ENCODE measurements at regions of chr4 and their contacts with region 1.

Region 1: GRCh38 chr4:47463235-47463956 is at the start of gene COMMD8:
- DNase-seq: peak; percentile 90
- H3K4me3 ChIP-seq: peak within 1 kb of the TSS; percentile 81
- H3K27ac ChIP-seq: no peak within 1 kb of the TSS
- H3K27me3 ChIP-seq: no peaks in the 10 kb centered on the region
- CTCF ChIP-seq: peak; percentile 32; the same call in 1 of the 2 replicates
- polyA plus RNA-seq, gene COMMD8: 21.1 and 35.1 TPM in 2 replicates

Region 2: DNA sequence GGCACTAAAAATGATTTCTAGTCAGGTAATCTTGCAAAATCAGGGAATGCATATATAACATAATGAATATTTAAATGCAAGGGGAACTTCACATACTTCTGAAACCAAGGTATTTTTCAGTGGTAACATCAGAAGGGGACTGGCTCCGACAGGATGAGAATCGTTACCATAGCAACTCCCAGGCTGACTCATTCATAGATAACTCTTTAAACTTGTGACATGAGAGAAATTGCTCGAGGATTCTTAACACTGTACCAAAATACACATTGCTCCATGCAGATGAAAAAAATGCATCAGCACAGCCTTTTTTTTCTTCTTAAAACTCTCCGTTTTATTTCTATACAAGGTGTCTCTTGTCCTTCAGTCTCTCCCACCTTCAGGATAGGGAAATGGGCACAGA is 317.8 kb before region 1 on chr4:
- CTCF ChIA-PET with region 1: no interaction called
- POLR2A ChIA-PET with region 1: no interaction called
- DNase-seq: peak; percentile 67
- H3K4me3 ChIP-seq: no peak overlapping the region
- H3K27ac ChIP-seq: no peak overlapping the region
- H3K27me3 ChIP-seq: no peaks in the 10 kb centered on the region
- CTCF ChIP-seq: no peak

Region 3: DNA sequence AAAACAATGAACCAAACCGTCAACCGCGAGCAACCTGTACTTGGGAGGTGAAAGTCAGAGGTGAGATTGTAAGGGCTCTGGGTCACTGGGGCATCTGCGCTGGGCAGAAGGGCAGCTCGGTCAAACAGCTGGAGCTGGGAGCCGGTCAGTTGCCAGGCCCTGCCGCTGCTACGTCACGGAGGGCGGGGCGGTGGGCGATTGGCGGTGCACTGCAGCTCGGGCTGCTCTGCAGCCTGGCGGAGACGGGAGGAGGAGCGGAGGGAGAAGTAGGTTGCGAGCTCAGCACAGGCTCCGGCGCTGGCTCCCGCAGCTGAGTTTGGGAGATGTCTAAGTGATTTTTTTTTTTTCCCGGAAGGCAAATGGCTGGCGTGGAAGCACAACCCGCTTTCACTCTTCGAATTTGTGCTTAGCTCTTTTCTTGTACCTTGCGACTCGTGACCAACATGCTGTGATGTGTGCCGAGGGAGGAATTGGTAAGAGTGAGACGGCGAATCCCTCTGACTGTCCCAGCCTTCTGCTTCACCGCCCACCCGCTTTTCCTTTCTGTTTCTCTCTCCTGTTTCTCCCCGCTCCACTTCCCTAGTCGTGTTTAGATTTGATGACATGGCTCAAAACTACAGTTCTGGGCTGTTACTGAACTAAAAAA is 21.8 kb after region 1 on chr4 and contains the start of gene ATP10D:
- CTCF ChIA-PET with region 1: interaction called, 4 read pairs
- POLR2A ChIA-PET with region 1: interaction called, 12 read pairs
- DNase-seq: peak; percentile 79
- H3K4me3 ChIP-seq: peak within 1 kb of the TSS; percentile 78
- H3K27ac ChIP-seq: peak within 1 kb of the TSS; percentile 93
- H3K27me3 ChIP-seq: no peaks in the 10 kb centered on the region
- CTCF ChIP-seq: peak; percentile 33
- polyA plus RNA-seq, gene ATP10D: 44.5 and 48.2 TPM in 2 replicates

Region 4: DNA sequence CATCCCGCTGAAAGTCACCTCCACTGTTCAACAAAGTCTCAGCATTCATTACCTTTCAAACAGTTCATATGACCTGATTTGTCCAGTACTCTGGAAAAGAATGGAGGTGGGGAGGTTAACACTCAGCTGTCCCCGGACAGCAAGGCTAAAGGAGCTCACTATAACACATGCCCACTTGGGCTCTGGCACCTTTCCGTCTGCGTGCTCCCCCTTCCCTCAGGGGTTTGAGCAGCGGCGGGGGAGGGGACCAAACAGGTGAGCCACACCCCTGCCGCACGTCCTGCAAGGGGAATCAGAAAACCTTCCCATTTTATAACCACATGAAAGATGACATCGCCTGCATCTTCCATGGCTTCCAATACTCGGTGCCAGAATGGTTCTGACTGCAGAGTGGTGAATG is 490.8 kb after region 1 on chr4:
- CTCF ChIA-PET with region 1: no interaction called
- POLR2A ChIA-PET with region 1: no interaction called
- DNase-seq: no peak
- H3K4me3 ChIP-seq: no peak overlapping the region
- H3K27ac ChIP-seq: no peak overlapping the region
- H3K27me3 ChIP-seq: no peaks in the 10 kb centered on the region
- CTCF ChIP-seq: no peak